Right cardiac atrium (tissue), 5 donors: ENCODE measurements at regions of chr13 and their contacts with region 1.

Region 1: DNA sequence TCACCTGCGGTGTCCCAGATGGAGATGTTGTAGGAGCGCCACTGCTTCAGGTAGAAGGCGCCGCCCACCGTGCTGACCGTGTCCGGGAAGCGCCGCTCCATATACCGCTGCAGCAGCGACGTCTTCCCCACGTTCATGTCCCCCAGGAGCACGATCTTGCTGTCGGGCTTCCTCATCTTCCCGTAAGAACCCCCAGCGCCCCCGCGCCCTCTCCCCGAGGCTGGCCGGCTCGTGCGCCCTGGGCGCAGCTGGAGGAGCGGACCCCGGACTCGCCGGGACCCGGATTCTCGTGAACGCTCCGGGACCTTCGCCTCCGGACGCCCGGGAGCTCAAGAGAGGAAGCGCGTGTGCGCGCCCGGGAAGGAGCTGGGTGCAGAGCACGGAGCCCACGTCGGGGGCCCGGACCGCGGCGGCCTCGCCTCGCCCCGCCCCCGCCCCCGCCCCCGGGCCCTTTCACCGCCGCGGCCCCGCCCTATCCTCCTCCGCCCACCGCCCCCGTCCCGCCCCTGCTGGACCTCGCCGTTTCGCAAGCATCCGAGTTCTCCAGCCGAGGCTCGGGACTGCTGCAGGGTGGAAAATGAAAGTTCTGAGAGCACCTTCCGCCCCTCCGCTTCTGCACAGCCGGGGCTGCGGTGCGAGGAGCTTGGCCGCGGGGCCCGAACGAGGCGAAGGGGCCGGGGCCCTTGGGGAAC is at the start of gene RAB20:
- DNase-seq: peak; percentile 90 to 96 (median 95)
- ATAC-seq: peak; percentile 89 to 91
- H3K4me3 ChIP-seq: peak within 1 kb of the TSS; percentile 97
- H3K27ac ChIP-seq: peak within 1 kb of the TSS; percentile 98
- H3K4me1 ChIP-seq: peaks cover 7% of the 10 kb centered on the region
- H3K27me3 ChIP-seq: no peaks in the 10 kb centered on the region
- total RNA-seq, gene RAB20: 10.5 to 15.3 (median 12.3) TPM

Region 2: DNA sequence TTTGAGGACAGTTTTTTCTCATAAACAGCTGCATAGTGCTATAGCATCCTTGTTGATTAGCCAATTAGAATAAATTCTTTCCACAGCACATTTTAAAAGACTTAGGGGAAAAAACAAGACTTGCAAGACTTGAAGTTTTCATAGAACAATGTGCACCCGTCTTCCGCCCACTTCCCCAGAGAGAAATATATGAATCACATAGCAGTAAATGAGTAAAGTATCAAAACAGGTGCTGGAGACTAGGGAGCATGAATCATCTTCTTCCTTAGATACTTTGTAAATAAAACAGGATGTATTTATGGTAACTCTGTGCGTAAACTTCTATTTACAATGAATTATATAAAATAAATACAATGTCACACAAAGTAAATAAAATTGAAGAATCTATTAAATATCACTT is 179.3 kb before region 1 on chr13:
- intact Hi-C with region 1: no loop called
- DNase-seq: no peak
- ATAC-seq: no peak
- H3K4me3 ChIP-seq: no peak overlapping the region
- H3K27ac ChIP-seq: no peak overlapping the region
- H3K4me1 ChIP-seq: peaks cover 16% of the 10 kb centered on the region
- H3K27me3 ChIP-seq: no peaks in the 10 kb centered on the region

Region 3: DNA sequence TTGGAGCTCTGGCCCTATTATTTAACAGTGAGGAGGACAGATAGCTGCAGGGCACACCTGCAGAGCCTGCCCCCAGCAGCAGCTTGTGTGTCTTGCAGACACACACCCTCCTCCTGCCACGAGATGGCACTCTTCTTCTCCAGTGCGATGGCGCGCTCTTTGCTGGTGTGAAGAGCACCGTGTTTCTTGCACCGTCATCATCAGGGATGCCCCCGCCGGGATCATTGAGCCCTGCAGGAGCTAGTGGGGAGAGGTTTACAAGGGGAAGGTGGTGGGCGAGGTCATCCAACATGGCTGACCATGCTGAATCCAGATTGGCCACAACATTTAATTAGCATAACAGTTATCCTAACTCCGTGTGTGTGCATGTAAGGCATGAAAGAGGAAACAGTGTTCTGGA is 105.5 kb before region 1 on chr13:
- intact Hi-C with region 1: loop called in 1 of 4 experiments (anchors 5 kb)
- DNase-seq: peak; percentile 73 to 87 (median 86)
- ATAC-seq: peak; percentile 83 to 89
- H3K4me3 ChIP-seq: no peak overlapping the region
- H3K27ac ChIP-seq: no peak overlapping the region
- H3K4me1 ChIP-seq: no peaks in the 10 kb centered on the region
- H3K27me3 ChIP-seq: no peaks in the 10 kb centered on the region

Region 4: DNA sequence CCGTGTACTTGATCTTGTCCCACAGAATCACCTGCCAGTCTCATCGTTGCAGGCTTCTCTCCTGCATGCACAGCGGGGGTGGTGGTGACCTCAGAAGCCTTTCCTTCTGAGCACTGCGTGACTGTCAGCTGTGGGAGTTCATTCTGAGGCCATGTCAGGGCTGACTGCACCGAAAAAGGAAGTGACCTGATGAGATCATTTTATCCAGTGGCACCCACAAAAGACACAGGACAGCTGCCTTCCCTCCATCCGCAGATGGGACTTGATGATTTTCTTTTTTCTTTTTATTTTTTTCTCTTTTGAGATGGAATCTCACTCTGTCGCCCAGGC is 89.7 kb before region 1 on chr13:
- intact Hi-C with region 1: loop called in 1 of 4 experiments (anchors 10 kb)
- DNase-seq: peak in 1 of 3 donors; percentile 46
- ATAC-seq: peak; percentile 38 to 66
- H3K4me3 ChIP-seq: no peak overlapping the region
- H3K27ac ChIP-seq: no peak overlapping the region
- H3K4me1 ChIP-seq: no peaks in the 10 kb centered on the region
- H3K27me3 ChIP-seq: no peaks in the 10 kb centered on the region

Region 5: GRCh38 chr13:110509971-110510786 is 51.3 kb before region 1 on chr13:
- intact Hi-C with region 1: loop called in 1 of 4 experiments (anchors 10 kb)
- DNase-seq: peak in 2 of 3 donors; percentile 65 to 73
- ATAC-seq: peak; percentile 2 to 6
- H3K4me3 ChIP-seq: no peak overlapping the region
- H3K27ac ChIP-seq: peak overlapping the region; percentile 87
- H3K4me1 ChIP-seq: peaks cover 8% of the 10 kb centered on the region
- H3K27me3 ChIP-seq: no peaks in the 10 kb centered on the region

Region 6: GRCh38 chr13:110615322-110616102 is 54.0 kb after region 1 on chr13 and contains the start of gene NAXD:
- intact Hi-C with region 1: no loop called
- DNase-seq: peak; percentile 96 to 98 (median 98)
- ATAC-seq: peak; percentile 96 to 98
- H3K4me3 ChIP-seq: peak within 1 kb of the TSS; percentile 88
- H3K27ac ChIP-seq: peak within 1 kb of the TSS; percentile 90
- H3K4me1 ChIP-seq: peaks cover 10% of the 10 kb centered on the region
- H3K27me3 ChIP-seq: no peaks in the 10 kb centered on the region
- total RNA-seq, gene NAXD: 24.4 to 28.6 (median 26.5) TPM